Dorsolateral prefrontal cortex (tissue), 120 donors: ENCODE measurements at regions of chr3 and their contacts with region 1.

Region 1: GRCh38 chr3:170961616-170962400 is 53.4 kb upstream of the EIF5A2 start:
- DNase-seq: peak in 3 of 10 donors; percentile 21 to 62 (median 50)
- H3K4me3 ChIP-seq: peak overlapping the region in 33 of 59 donors; percentile 1 to 49 (median 26)
- H3K27ac ChIP-seq: peak overlapping the region in 58 of 59 donors; percentile 14 to 92 (median 82)
- H3K27me3 ChIP-seq: no peaks in the 10 kb centered on the region
- CTCF ChIP-seq: peak; percentile 34 to 90 (median 78)

Region 2: DNA sequence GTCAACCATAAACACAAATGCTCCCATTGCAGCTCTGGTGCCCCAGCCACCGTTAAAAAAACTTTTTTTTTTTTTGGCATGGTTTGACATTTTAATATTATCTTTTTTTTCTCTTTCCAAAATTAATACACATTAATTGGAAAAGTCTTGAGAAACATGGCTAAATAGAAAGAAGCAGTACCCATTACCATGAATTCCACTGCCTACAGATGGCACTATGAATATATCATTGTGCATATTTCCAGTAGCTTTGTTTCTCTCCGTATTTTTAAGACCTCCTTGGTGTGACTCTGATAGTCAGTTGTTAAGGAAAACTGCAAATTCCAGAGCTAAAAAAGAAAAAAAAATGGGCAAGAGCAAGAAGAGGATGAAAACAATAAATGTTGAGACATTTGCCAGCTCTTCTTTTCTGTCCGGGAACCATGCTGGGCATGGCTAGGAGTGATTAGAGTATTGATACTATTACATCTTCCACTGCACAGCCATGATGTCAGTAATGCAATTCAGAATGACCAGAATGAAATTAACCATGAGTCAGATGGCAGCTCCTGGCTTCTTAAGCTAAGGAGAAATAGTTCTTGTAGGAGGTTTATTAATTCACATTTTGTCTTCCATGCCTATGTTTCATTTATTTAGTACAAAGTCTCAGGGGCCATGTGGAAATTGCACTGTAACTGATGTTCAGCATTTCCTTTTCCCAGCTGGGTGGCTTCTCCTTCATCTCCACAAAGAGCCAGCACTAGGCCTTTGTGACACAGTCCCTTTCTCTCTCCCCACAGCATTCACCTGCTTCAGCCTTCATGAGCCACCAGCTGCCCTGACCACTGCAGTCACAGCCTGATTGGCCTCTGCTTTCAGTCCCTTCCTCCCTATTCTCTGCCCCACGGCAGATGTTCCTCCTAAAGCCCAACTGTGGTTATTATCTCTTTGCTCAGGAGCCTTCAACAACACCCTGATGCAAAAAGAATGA is 407.7 kb before region 1 on chr3:
- intact Hi-C with region 1: no loop called
- DNase-seq: no peak
- H3K4me3 ChIP-seq: no peak overlapping the region
- H3K27ac ChIP-seq: peak overlapping the region in 10 of 59 donors; percentile 11 to 68 (median 22)
- H3K27me3 ChIP-seq: no peaks in the 10 kb centered on the region
- CTCF ChIP-seq: peak in 36 of 56 donors; percentile 8 to 63 (median 33)

Region 3: DNA sequence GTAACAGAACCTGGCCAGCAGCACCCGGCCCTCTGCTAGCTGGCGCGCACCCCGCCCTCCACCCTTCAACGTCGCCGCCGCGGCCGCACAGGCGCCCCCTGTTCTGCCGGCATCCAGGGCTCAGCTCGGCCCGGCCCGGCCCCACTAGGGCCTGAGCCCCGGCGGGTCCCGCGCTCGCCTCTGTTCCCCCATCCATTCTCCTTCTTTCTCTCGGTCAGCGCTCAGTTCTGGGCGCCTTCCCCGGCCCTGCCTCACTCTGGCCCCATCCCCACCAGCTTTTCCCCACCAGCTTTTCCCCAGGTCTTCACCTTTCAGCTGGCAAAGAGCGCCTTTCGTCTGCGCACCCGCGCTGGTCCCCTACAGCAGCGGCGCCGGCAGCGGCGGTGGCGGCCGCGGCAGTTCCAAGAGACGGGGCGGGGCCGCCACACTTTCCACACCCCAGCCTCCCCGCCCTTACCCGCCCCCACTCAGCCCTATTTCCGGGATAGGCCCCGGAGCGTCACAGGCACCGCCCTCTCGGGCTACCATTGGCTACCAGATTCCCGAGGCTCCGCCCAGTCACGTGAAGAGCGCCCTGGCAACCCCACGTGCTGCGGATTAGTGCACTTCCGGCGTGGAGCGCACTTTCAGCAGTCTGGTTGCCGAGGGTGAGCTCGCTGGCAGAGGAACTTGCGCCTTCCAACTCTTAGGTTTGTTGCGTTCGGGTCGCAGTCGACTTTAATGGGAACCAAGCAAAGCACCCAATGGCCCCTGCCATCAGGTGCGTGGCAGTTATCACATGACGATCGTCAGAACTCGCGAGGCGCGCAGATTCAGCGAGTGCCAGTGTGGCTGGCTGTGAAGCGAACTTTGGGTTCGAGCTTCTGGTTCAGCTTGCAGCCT is 53.3 kb before region 1 on chr3 and contains the start of gene EIF5A2:
- intact Hi-C with region 1: no loop called
- DNase-seq: peak; percentile 34 to 97 (median 92)
- H3K4me3 ChIP-seq: peak within 1 kb of the TSS; percentile 51 to 91 (median 79)
- H3K27ac ChIP-seq: peak within 1 kb of the TSS in 24 of 59 donors; percentile 0 to 76 (median 58)
- H3K27me3 ChIP-seq: no peaks in the 10 kb centered on the region
- CTCF ChIP-seq: peak in 3 of 56 donors; percentile 9 to 33 (median 20)
- total RNA-seq, gene EIF5A2: 9.9 to 61.9 (median 29.6) TPM

Region 4: DNA sequence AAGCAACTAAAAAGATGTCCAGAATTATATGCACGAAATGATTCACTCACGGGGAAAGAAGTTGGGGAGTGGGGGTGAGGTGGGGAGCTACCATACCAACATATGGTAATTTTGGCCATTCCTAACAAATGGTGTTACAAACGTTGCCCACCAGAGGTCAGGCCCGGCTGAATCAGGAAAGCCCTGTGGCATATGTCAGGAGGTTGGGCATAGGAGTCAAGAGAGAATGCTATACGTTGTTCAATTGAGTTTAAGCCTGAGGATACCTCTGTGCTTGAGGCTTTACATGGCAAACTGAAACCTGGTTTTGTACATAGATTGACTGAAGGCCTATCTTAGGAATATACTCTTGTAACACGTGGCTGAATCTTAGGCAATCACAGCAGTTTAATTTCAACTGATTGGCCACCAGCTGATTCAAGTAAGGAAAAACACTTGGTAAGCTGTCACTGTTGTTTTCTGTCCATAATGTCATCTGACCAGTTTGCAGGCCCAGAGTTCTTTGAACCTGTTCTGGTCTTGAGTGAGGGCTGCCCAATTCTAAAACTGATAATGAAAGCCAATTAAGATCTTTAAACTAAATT is 88.1 kb after region 1 on chr3:
- intact Hi-C with region 1: loop called in 1 of 2 experiments (anchors 5 kb)
- DNase-seq: peak in 8 of 10 donors; percentile 18 to 62 (median 50)
- H3K4me3 ChIP-seq: no peak overlapping the region
- H3K27ac ChIP-seq: peak overlapping the region in 2 of 59 donors; percentile 6 to 18
- H3K27me3 ChIP-seq: no peaks in the 10 kb centered on the region
- CTCF ChIP-seq: peak in 55 of 56 donors; percentile 21 to 84 (median 66)

Region 5: DNA sequence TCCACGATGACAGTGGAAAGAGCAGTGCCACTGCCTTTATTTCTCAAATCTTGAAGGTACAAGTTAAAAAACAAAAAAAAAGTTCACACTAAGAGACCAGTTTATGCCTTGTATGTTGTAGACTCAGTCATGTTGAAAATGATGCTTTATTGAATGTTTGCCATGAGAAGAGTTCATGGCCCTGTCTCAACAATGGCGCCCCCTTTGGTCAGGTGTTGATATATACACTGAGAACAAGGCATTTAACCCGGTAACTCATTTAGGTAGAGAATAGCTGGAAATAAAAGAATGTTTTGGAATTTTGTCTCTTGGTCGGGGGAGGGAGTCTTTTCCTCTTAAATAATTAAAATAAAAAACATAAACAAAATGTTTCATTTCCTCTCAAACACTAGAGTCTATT is 210.3 kb after region 1 on chr3:
- intact Hi-C with region 1: loop called in 1 of 2 experiments (anchors 5 kb)
- DNase-seq: no peak
- H3K4me3 ChIP-seq: no peak overlapping the region
- H3K27ac ChIP-seq: peak overlapping the region in 15 of 59 donors; percentile 9 to 96 (median 91)
- H3K27me3 ChIP-seq: no peaks in the 10 kb centered on the region
- CTCF ChIP-seq: peak in 14 of 56 donors; percentile 6 to 34 (median 19)

Region 6: GRCh38 chr3:171459942-171460724 is 498.3 kb after region 1 on chr3 and contains the start of gene TNIK:
- intact Hi-C with region 1: loop called in 1 of 2 experiments (anchors 5 kb)
- DNase-seq: peak; percentile 87 to 97 (median 96)
- H3K4me3 ChIP-seq: peak within 1 kb of the TSS; percentile 58 to 97 (median 84)
- H3K27ac ChIP-seq: peak within 1 kb of the TSS; percentile 32 to 94 (median 87)
- H3K27me3 ChIP-seq: no peaks in the 10 kb centered on the region
- CTCF ChIP-seq: peak in 4 of 56 donors; percentile 3 to 31 (median 13)
- total RNA-seq, gene TNIK: 63.1 to 191 (median 103) TPM

Region 7: DNA sequence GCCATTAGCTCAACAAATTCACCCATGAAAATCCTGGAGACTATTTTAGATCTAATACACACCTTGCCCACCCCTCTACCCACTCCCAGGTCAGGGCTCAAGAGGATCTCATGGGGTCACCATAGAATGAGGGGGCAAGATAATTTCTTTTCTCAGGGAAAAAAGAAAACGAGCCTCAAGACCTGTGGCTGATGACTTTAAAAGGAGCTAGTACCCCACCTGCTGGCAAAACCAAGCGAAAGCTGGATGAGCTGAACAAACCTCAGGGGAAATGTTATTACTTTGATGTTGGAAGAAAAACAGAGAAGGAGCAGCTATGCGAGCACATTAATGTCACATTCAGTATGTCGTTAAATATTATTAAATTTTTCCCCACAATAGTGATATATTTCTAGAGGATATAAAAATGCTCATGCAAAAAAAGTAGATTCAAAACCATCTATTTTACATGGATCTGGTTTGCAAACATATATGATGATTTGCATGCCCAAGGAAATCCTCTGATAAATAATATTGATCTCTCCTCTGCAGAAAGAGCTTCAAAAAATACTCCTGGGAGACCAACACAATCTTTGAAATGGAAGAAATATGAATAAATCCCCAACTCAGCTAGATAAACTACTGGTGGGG is 810.7 kb after region 1 on chr3:
- intact Hi-C with region 1: loop called (anchors 5 kb)
- DNase-seq: peak in 5 of 10 donors; percentile 53 to 78 (median 64)
- H3K4me3 ChIP-seq: no peak overlapping the region
- H3K27ac ChIP-seq: peak overlapping the region in 55 of 59 donors; percentile 11 to 100 (median 78)
- H3K27me3 ChIP-seq: no peaks in the 10 kb centered on the region
- CTCF ChIP-seq: peak; percentile 52 to 90 (median 77)

Region 8: GRCh38 chr3:172341482-172342059 is 1379.8 kb after region 1 on chr3:
- intact Hi-C with region 1: loop called (anchors 10 kb)
- DNase-seq: no peak
- H3K4me3 ChIP-seq: no peak overlapping the region
- H3K27ac ChIP-seq: no peak overlapping the region
- H3K27me3 ChIP-seq: no peaks in the 10 kb centered on the region
- CTCF ChIP-seq: peak; percentile 54 to 88 (median 75)